ENCODE measurements at regions of chr10 and their contacts with region 1.

Region 1: GRCh38 chr10:6202684-6203330 is at the start of gene PFKFB3:
- DNase-seq: peak; percentile 92
- ATAC-seq: peak; percentile 80
- H3K4me3 ChIP-seq: peak within 1 kb of the TSS; percentile 83
- H3K27ac ChIP-seq: peak within 1 kb of the TSS; percentile 91
- H3K4me1 ChIP-seq: peaks cover 17% of the 10 kb centered on the region
- H3K27me3 ChIP-seq: no peaks in the 10 kb centered on the region
- CTCF ChIP-seq: peak; percentile 97
- POLR2A ChIP-seq: peak; percentile 100
- RAD21 ChIP-seq: peak; percentile 75
- total RNA-seq, gene PFKFB3: 26.9 and 34.1 TPM in 2 replicates

Region 2: DNA sequence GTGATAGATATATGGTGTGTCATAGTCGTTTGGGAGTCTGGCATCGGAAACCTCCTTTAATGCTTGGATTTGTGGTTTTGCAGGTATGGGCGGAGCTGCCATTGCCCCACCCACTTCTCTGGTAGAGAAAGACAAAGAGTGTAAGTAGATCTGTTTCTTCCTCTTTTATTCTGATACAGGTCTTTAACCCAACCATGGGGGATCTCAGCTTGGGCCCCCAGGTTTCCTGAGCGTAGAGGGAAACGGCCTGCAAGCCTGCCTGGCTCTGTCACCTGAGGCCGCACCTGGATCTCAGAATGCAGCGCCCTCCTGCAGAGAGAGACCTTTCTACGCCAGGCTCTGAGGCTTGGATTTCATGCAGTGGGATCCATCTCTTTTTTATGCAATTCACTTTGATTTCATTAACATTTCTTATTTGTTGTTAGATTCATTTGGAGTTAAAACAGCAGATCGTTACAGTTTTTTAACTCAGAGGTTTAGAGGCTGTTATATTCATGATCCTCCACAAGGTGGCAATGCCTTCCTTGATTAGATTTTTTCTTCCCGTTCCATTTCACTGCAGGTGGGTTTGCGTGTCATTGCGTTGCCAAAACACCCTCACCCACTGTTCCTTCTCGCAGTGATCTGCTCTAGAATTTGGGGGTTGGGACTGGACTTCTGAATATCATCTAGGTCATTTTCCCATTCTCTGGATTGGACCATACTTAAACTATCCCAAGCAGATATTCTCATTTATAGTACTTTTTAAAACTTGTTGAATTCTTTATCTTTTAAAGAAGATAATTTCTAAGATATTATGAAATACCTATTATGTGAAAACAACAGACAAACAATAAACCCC is 94.0 kb before region 1 on chr10:
- CTCF ChIA-PET with region 1: interaction called, 3 read pairs
- POLR2A ChIA-PET with region 1: no interaction called
- dilution Hi-C with region 1: no loop called
- in situ Hi-C with region 1: loop called (anchors 5 kb)
- intact Hi-C with region 1: loop called (anchors 1 kb)
- DNase-seq: peak; percentile 61
- ATAC-seq: peak; percentile 53
- H3K4me3 ChIP-seq: no peak overlapping the region
- H3K27ac ChIP-seq: no peak overlapping the region
- H3K4me1 ChIP-seq: peaks cover 4% of the 10 kb centered on the region
- H3K27me3 ChIP-seq: no peaks in the 10 kb centered on the region
- CTCF ChIP-seq: peak; percentile 79
- POLR2A ChIP-seq: no peak
- RAD21 ChIP-seq: peak; percentile 86

Region 3: DNA sequence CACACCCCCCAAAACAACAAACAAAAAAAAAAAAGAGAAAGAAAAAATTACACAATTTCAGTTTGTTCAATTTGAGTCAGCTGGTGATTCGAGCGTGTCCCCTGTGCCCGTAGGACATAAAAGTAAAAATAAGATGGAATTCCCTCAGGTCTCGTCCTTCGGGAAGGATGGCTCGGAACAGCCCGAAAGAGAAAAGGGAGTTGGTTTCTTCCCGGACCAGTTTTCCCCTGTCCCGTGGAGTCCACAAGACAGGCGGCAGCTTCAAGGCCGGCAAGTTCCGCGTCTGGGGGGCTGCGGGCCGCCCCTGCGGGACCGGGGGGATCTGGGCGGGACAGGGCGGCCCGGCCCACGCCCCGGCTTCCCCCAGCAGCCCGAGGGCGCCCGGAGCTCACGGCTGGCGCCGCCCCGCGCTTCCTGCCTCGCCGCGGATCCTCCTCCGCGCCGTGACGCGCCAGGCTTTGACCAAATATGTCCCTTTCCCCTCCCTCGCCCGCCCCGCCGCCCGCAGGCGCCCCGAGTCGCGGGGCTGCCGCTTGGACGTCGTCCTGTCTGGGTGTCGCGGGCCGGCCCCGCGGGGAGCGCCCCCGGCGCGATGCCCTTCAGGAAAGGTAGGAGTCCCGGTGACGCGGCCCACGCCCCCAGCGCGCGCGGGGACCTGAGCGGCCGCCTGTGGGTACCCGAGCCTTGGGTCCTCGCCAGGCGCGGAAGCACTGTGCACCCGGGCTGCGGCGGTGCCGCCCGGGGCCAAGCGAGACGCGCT is 58.2 kb before region 1 on chr10:
- CTCF ChIA-PET with region 1: no interaction called
- POLR2A ChIA-PET with region 1: no interaction called
- dilution Hi-C with region 1: no loop called
- in situ Hi-C with region 1: no loop called
- intact Hi-C with region 1: loop called (anchors 1 kb)
- DNase-seq: peak; percentile 82
- ATAC-seq: peak; percentile 89
- H3K4me3 ChIP-seq: peak overlapping the region; percentile 75
- H3K27ac ChIP-seq: peak overlapping the region; percentile 93
- H3K4me1 ChIP-seq: peaks cover 21% of the 10 kb centered on the region
- H3K27me3 ChIP-seq: no peaks in the 10 kb centered on the region
- CTCF ChIP-seq: no peak
- POLR2A ChIP-seq: peak; percentile 90
- RAD21 ChIP-seq: no peak

Region 4: DNA sequence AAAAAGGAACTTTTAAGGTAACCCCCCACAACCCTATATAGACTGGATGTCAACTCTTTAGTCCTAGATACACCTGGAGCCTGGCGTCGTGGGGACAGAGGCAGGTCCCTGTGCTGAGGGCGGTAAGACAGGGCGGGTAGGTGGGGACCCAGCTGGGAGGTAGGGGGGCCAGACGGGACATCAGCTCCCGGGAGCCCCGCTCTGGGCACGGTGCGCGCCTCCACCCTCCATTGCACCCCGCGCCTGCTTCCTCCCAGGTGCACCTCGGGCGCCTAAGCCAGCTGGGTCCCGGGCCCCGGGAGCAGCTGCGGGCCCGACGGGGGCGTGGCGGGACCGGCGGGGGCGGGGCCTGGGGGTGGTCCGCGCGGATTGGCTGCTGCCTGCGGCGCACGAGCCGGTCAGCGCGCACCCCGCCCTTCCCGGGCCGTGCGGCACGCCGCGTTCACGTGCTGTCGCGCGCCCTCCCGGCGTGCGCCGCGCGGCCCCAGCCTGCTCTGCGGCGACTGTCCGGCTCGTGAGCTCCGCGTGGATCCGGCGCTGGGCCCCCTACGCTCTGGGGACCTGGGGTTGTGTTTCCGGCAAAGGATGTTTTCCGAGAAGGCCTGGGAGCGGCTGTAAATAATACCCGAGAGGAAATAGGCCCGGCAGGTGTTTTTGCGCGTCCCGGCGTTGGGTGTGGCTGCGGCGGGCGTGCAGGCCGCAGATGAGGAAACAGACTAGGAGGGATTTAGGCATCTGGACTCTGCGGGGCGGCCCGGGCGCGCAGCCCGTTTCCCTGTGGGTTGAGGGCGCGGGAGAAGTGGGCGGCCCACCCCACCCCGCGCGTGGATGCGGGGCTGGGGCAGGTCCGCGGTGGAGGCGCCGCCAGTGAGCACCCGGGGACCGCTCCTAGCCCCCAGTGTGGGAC is 39.2 kb before region 1 on chr10:
- CTCF ChIA-PET with region 1: interaction called, 3 read pairs
- POLR2A ChIA-PET with region 1: no interaction called
- dilution Hi-C with region 1: no loop called
- in situ Hi-C with region 1: no loop called
- intact Hi-C with region 1: loop called (anchors 5 kb)
- DNase-seq: peak; percentile 84
- ATAC-seq: peak; percentile 97
- H3K4me3 ChIP-seq: peak overlapping the region; percentile 85
- H3K27ac ChIP-seq: peak overlapping the region; percentile 55
- H3K4me1 ChIP-seq: peaks cover 11% of the 10 kb centered on the region
- H3K27me3 ChIP-seq: no peaks in the 10 kb centered on the region
- CTCF ChIP-seq: no peak
- POLR2A ChIP-seq: peak; percentile 44; the same call in 1 of the 2 replicates
- RAD21 ChIP-seq: no peak

Region 5: DNA sequence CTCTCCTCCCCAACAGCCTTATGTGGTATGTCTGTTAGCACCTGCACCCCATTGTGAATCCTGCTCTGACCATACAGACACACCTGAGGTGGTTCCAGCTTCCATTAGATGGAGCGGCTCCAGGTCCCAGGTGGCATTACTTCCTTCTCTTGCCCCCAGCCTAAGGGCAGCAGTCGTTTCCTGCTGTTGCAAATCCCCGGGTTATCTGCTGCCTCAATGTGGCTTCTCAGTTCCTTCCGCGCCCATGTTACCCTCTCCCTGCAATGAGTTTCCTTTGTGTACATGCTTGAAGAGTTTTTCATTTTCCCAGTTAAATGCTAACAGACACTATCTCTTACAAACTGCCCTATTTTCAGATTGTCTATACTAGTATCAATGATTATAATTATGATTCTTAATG is 440.1 kb after region 1 on chr10:
- CTCF ChIA-PET with region 1: no interaction called
- POLR2A ChIA-PET with region 1: no interaction called
- dilution Hi-C with region 1: no loop called
- in situ Hi-C with region 1: no loop called
- intact Hi-C with region 1: no loop called
- DNase-seq: no peak
- ATAC-seq: no peak
- H3K4me3 ChIP-seq: no peak overlapping the region
- H3K27ac ChIP-seq: no peak overlapping the region
- H3K4me1 ChIP-seq: no peaks in the 10 kb centered on the region
- H3K27me3 ChIP-seq: no peaks in the 10 kb centered on the region; the same call in 1 of the 2 replicates
- CTCF ChIP-seq: no peak
- POLR2A ChIP-seq: no peak
- RAD21 ChIP-seq: no peak

Measured in IMR-90 (cell line).